ENCODE measurements at regions of chr14 and their contacts with region 1.

Region 1: DNA sequence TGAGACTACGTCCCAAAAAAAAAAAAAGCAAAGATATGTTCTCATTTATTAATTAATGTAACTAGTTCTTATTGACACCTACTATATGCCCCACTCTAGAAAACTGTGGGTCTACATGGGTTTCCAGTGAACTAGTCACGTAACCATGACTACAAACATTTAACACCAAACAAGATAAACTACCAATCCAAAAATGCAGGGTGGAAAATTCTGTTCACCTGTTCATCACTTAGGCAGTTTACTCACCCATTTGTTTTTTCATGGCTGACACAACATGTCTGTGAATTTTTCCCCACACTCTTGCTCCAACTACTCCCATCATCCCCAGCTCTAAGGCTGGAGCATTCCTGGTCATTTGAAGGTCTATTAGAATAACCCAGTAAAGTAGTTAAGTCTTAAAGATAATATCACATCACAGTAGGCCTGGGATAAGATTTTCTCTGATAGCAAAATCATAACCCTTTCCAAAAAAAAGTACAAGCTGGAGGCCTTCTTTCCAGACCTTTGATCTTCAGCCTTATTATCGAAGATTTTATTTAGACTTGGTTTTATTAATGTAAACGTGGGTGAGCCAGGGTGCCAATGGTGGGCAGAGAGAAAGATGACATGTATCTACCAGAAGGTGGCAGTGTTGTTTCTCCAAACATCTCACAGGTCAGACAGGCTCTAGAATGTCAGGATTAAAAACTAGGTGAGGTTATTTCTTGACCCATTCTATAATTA is 61.6 kb upstream of the DAAM1 start:
- DNase-seq: peak in 8 of 14 experiments; percentile 1 to 78 (median 18)
- ATAC-seq: peak; percentile 82
- H3K4me3 ChIP-seq: no peak overlapping the region
- H3K4me3 Mint-ChIP-seq: no peak overlapping the region
- H3K27ac ChIP-seq: no peak overlapping the region
- H3K27ac Mint-ChIP-seq: no peak overlapping the region
- H3K4me1 ChIP-seq: no peaks in the 10 kb centered on the region
- H3K4me1 Mint-ChIP-seq: no peaks in the 10 kb centered on the region
- H3K27me3 ChIP-seq: no peaks in the 10 kb centered on the region
- H3K27me3 Mint-ChIP-seq: peaks cover 32% of the 10 kb centered on the region
- CTCF ChIP-seq: peak; percentile 88

Region 2: GRCh38 chr14:58501214-58501816 is 625.6 kb before region 1 on chr14:
- CTCF ChIA-PET with region 1: interaction called, 6 read pairs
- POLR2A ChIA-PET with region 1: no interaction called
- intact Hi-C with region 1: loop called (anchors 1 to 2 kb)
- DNase-seq: peak in 5 of 14 experiments; percentile 21 to 70 (median 46)
- ATAC-seq: peak; percentile 71
- H3K4me3 ChIP-seq: no peak overlapping the region
- H3K4me3 Mint-ChIP-seq: no peak overlapping the region
- H3K27ac ChIP-seq: no peak overlapping the region
- H3K27ac Mint-ChIP-seq: no peak overlapping the region
- H3K4me1 ChIP-seq: no peaks in the 10 kb centered on the region
- H3K4me1 Mint-ChIP-seq: no peaks in the 10 kb centered on the region
- H3K27me3 ChIP-seq: no peaks in the 10 kb centered on the region
- H3K27me3 Mint-ChIP-seq: no peaks in the 10 kb centered on the region
- CTCF ChIP-seq: peak; percentile 82

Region 3: GRCh38 chr14:59346796-59347510 is 220.1 kb after region 1 on chr14:
- CTCF ChIA-PET with region 1: no interaction called
- POLR2A ChIA-PET with region 1: no interaction called
- intact Hi-C with region 1: loop called in 1 of 2 experiments (anchors 5 kb)
- DNase-seq: no peak
- ATAC-seq: no peak
- H3K4me3 ChIP-seq: no peak overlapping the region
- H3K4me3 Mint-ChIP-seq: no peak overlapping the region
- H3K27ac ChIP-seq: no peak overlapping the region
- H3K27ac Mint-ChIP-seq: no peak overlapping the region
- H3K4me1 ChIP-seq: no peaks in the 10 kb centered on the region
- H3K4me1 Mint-ChIP-seq: no peaks in the 10 kb centered on the region
- H3K27me3 ChIP-seq: no peaks in the 10 kb centered on the region
- H3K27me3 Mint-ChIP-seq: no peaks in the 10 kb centered on the region
- CTCF ChIP-seq: no peak

Region 4: GRCh38 chr14:59576332-59577294 is 449.7 kb after region 1 on chr14 and contains the start of gene CCDC175:
- CTCF ChIA-PET with region 1: interaction called, 3 read pairs
- POLR2A ChIA-PET with region 1: no interaction called
- intact Hi-C with region 1: loop called (anchors 1 kb)
- DNase-seq: peak; percentile 64 to 93 (median 78)
- ATAC-seq: peak; percentile 98
- H3K4me3 ChIP-seq: peak within 1 kb of the TSS; percentile 62
- H3K4me3 Mint-ChIP-seq: peak within 1 kb of the TSS; percentile 68
- H3K27ac ChIP-seq: no peak within 1 kb of the TSS
- H3K27ac Mint-ChIP-seq: no peak within 1 kb of the TSS
- H3K4me1 ChIP-seq: peaks cover 9% of the 10 kb centered on the region
- H3K4me1 Mint-ChIP-seq: peaks cover 6% of the 10 kb centered on the region
- H3K27me3 ChIP-seq: peaks cover 6 to 8% of the 10 kb centered on the region in 2 experiments
- H3K27me3 Mint-ChIP-seq: peaks cover 34% of the 10 kb centered on the region
- CTCF ChIP-seq: peak; percentile 87
- total RNA-seq, gene CCDC175: not detected

Region 5: DNA sequence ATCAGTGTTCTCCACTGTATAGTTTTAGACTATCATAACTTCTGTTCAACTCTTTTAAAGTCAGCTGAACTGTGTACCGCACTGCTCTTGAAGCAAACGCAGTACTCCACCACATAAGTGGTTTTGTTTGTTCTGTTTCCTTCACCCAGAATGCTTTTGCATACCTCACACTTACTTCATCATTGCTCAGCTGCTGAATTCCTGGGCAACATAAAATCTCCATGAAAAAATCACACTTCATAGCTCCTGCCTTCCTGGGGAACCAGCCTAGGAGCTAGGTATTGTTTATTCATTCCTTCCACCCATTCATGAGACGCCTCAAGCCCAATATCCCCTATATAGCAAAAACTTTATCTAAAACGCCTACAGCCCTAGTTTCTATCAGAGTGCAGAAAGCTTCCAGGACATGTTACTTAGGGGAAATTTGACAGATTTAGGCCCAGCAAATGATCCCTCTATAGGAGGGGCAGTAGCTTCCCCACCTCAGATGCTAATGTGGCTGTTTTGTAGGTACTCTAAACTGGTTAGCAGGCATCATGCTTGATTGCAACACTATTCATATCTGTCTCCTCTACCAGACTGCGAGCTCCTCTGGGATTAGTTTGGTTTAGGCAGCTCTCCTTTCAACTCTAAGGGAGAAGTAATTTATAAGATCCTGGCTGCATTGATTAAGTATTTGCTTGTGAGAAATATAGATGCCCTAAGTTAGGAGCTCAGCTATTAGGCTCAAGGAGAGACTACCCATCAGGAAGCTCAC is 837.6 kb after region 1 on chr14:
- CTCF ChIA-PET with region 1: no interaction called
- POLR2A ChIA-PET with region 1: no interaction called
- intact Hi-C with region 1: loop called in 1 of 2 experiments (anchors 10 kb)
- DNase-seq: peak in 2 of 14 experiments; percentile 13 to 18
- ATAC-seq: peak; percentile 10
- H3K4me3 ChIP-seq: peak overlapping the region; percentile 64
- H3K4me3 Mint-ChIP-seq: peak overlapping the region; percentile 94
- H3K27ac ChIP-seq: no peak overlapping the region
- H3K27ac Mint-ChIP-seq: peak overlapping the region; percentile 96
- H3K4me1 ChIP-seq: peaks cover 9% of the 10 kb centered on the region
- H3K4me1 Mint-ChIP-seq: peaks cover 22% of the 10 kb centered on the region
- H3K27me3 ChIP-seq: no peaks in the 10 kb centered on the region
- H3K27me3 Mint-ChIP-seq: no peaks in the 10 kb centered on the region
- CTCF ChIP-seq: no peak